Tibial artery (tissue), 4 donors: ENCODE measurements at regions of chr7 and their contacts with region 1.

Region 1: DNA sequence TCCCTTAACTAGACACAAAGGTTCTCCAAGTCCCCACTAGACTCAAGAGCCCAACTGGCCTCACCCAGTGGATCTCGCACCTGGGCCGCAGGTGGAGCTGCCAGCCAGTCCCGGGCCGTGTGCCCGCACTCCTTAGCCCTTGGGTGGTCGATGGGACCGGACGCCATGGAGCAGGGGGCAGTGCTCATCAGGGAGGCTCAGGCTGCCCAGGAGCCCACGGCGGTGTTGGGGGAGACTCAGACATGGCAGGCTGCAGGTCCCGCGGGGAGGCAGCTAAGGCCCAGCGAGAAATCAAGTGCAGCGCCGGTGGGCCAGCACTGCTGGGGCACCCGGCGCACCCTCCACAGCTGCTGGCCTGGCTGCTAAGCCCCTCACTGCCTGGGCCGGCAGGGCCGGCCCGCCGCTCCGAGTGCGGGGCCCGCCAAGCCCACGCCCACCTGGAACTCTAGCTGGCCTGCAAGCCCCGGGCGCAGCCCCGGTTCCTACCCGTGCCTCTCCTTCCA is 130.5 kb downstream of the RALA start:
- DNase-seq: no peak
- H3K4me3 ChIP-seq: no peak overlapping the region
- H3K27ac ChIP-seq: peak overlapping the region; percentile 14 to 23
- H3K4me1 ChIP-seq: peaks cover 0 to 14% (median 11%) of the 10 kb centered on the region in 4 donors
- H3K27me3 ChIP-seq: no peaks in the 10 kb centered on the region
- CTCF ChIP-seq: no peak

Region 2: GRCh38 chr7:39727231-39728012 is 26.5 kb before region 1 on chr7:
- intact Hi-C with region 1: loop called (anchors 2 kb)
- DNase-seq: no peak
- H3K4me3 ChIP-seq: no peak overlapping the region
- H3K27ac ChIP-seq: no peak overlapping the region
- H3K4me1 ChIP-seq: no peaks in the 10 kb centered on the region
- H3K27me3 ChIP-seq: no peaks in the 10 kb centered on the region
- CTCF ChIP-seq: no peak